HEK293T (cell line): ENCODE measurements at regions of chr4 and their contacts with region 1.

Region 1: DNA sequence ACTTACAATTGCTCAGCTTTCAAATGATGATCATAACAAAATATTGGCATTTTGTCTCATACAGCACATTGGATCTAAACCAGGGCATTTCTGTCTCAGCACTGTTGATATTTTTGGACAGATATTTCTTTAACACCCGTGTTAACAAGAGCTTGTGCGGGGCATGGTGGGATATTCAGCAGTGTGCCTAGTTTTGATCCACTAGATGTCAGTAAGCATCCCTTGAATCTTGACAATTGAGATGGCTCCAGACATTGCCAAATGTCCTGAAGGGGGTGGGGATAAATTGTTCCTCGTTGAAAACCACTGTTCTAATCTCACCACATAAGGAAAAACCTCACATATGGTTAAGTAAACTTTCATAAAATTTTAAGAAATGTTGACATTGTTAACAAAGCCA is 806.3 kb downstream of the STIM2 start:
- DNase-seq: peak; percentile 6

Region 2: DNA sequence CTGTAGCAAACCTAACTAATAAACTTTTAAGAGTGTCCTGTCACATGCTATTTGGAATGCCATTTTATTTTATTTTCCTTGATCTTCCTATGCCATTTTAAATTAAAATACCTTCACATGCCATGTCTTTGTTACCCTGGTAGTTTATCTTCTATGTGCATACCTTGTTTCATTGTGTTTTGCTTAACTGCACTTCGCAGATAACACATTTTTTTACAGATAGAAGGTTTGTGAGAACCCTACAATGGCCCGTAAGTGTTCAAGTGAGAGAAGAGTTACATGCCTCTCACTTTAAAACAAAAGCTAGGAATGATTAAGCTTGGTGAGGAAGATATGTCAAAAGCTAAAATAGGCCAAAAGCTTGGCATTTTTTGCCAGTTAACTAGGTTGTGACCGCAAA is 62.3 kb before region 1 on chr4:
- CTCF ChIA-PET with region 1: no interaction called
- POLR2A ChIA-PET with region 1: no interaction called
- DNase-seq: no peak

Region 3: GRCh38 chr4:27648416-27648815 is 18.5 kb before region 1 on chr4:
- CTCF ChIA-PET with region 1: no interaction called
- POLR2A ChIA-PET with region 1: no interaction called
- DNase-seq: no peak

Region 4: DNA sequence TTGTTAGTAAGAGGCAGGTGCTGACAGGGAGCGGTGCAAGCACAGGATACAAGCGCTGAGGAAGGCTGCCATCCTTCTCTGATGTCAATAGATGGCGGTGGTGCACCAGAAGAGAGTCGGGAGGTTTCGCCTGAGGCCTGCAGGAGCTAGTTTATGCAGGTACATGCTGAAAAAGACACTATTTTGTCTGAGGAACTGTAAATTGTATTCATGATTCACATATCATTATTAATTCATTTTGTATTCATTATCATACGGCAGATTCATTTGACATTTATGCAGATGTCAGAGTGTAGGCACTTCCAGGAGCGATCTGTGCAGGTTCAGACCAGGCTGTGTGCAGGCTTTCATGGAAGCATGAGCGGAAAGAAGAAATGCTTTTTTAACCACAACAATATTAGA is 17.7 kb after region 1 on chr4:
- CTCF ChIA-PET with region 1: interaction called, 11 read pairs
- POLR2A ChIA-PET with region 1: no interaction called
- DNase-seq: peak; percentile 38

Region 5: DNA sequence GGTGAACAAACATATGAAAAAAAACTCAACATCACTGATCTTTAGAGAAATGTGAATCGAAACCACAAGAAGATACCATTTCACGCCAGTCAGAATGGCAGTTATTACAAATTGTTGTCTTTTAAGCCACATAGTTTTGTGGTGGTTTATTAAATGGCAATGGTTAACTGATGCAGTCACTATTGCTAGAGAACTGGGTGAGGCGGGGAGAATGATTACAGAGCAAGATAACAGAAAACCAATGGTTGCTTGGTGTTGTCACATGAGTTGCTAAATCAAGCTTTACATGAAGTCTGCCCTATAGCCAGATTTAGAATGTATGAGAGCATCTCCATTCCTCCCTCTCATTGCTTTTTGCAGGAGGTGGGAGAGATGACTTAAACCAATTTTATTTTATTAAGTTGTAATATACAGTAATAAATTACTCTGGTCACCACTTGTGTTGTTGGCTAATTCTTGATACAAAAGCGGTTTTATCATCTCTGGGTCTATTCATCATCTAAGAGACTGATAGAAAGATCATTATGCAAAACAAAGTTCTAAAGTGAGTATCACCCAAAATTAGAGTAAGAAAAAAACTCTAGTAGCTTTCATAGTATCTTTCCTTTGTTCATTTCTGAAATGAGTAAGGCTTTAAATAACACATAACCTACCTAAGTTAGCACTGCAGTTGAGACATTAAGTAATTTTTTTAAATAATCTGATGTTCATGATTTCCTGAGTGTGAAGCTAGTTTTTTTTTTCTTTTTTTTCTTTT is 53.2 kb after region 1 on chr4:
- CTCF ChIA-PET with region 1: no interaction called
- POLR2A ChIA-PET with region 1: no interaction called
- DNase-seq: no peak

Region 6: DNA sequence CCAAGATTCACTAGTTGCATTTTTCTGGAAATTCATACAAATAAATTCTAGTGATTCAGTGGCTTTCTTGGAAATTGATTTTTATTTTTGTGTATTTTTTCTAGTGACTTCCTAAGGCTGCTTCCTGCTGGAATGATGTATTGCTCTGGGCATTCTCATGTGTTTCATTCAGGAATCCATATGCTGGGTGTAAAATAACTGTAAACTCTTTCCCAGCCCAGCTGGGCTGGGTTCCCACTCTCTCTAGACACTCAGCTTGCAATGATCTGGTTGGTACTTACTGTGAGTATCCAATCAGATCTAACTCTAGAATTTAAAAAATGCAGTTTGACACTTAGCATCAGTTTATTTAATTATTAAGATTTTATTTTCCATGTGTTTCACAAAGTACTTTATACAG is 75.9 kb after region 1 on chr4:
- CTCF ChIA-PET with region 1: no interaction called
- POLR2A ChIA-PET with region 1: no interaction called
- DNase-seq: no peak